B cell (primary cell): ENCODE measurements at regions of chr11 and their contacts with region 1.

Region 1: GRCh38 chr11:10653926-10654810 is 39.4 kb downstream of the IRAG1 start:
- DNase-seq: peak; percentile 79
- ATAC-seq: peak; percentile 69
- H3K4me3 ChIP-seq: peak overlapping the region in 1 of 5 experiments; percentile 1
- H3K4me3 Mint-ChIP-seq: no peak overlapping the region
- H3K27ac ChIP-seq: no peak overlapping the region
- H3K27ac Mint-ChIP-seq: peak overlapping the region; percentile 2
- H3K4me1 ChIP-seq: peaks cover 60 to 66% of the 10 kb centered on the region in 2 donors
- H3K4me1 Mint-ChIP-seq: peaks cover 82% of the 10 kb centered on the region
- H3K27me3 ChIP-seq: no peaks in the 10 kb centered on the region
- H3K27me3 Mint-ChIP-seq: no peaks in the 10 kb centered on the region
- CTCF ChIP-seq: peak; percentile 63

Region 2: DNA sequence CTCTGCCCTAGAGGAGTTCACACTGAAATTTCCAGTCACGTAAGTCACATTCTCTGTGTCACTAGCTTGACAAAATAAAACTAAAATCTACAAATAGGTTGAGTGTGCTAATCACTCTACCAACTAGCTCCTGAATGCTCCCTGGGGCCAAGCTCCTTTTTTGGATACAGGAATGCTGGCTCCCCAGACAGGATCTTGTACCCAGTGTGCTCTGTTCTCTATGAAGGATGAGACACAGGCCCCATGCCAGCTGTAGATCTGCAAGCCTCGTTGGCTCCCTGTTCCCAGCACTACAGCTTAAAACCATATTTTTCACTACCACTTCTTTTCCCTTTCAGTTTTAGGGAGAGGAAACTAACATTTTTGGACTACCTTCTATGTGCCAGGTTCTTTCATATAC is 1273.4 kb before region 1 on chr11:
- CTCF ChIA-PET with region 1: no interaction called
- POLR2A ChIA-PET with region 1: no interaction called
- intact Hi-C with region 1: no loop called
- DNase-seq: no peak
- ATAC-seq: no peak
- H3K4me3 ChIP-seq: no peak overlapping the region
- H3K4me3 Mint-ChIP-seq: no peak overlapping the region
- H3K27ac ChIP-seq: no peak overlapping the region
- H3K27ac Mint-ChIP-seq: no peak overlapping the region
- H3K4me1 ChIP-seq: peaks cover 10 to 13% of the 10 kb centered on the region in 2 donors
- H3K4me1 Mint-ChIP-seq: peaks cover 12% of the 10 kb centered on the region
- H3K27me3 ChIP-seq: no peaks in the 10 kb centered on the region
- H3K27me3 Mint-ChIP-seq: no peaks in the 10 kb centered on the region
- CTCF ChIP-seq: no peak

Region 3: GRCh38 chr11:10405855-10406592 is 248.1 kb before region 1 on chr11:
- CTCF ChIA-PET with region 1: interaction called, 14 read pairs
- POLR2A ChIA-PET with region 1: no interaction called
- intact Hi-C with region 1: no loop called
- DNase-seq: peak; percentile 72
- ATAC-seq: peak; percentile 85
- H3K4me3 ChIP-seq: no peak overlapping the region
- H3K4me3 Mint-ChIP-seq: no peak overlapping the region
- H3K27ac ChIP-seq: no peak overlapping the region
- H3K27ac Mint-ChIP-seq: no peak overlapping the region
- H3K4me1 ChIP-seq: peaks cover 4 to 11% of the 10 kb centered on the region in 2 donors
- H3K4me1 Mint-ChIP-seq: peaks cover 7% of the 10 kb centered on the region
- H3K27me3 ChIP-seq: no peaks in the 10 kb centered on the region
- H3K27me3 Mint-ChIP-seq: no peaks in the 10 kb centered on the region
- CTCF ChIP-seq: peak; percentile 78

Region 4: GRCh38 chr11:10534316-10534715 is 119.9 kb before region 1 on chr11:
- CTCF ChIA-PET with region 1: interaction called, 11 read pairs
- POLR2A ChIA-PET with region 1: no interaction called
- intact Hi-C with region 1: no loop called
- DNase-seq: peak; percentile 54
- ATAC-seq: no peak
- H3K4me3 ChIP-seq: no peak overlapping the region
- H3K4me3 Mint-ChIP-seq: no peak overlapping the region
- H3K27ac ChIP-seq: peak overlapping the region in 1 of 2 donors; percentile 38
- H3K27ac Mint-ChIP-seq: no peak overlapping the region
- H3K4me1 ChIP-seq: peaks cover 24 to 39% of the 10 kb centered on the region in 2 donors
- H3K4me1 Mint-ChIP-seq: peaks cover 53% of the 10 kb centered on the region
- H3K27me3 ChIP-seq: no peaks in the 10 kb centered on the region
- H3K27me3 Mint-ChIP-seq: no peaks in the 10 kb centered on the region
- CTCF ChIP-seq: no peak

Region 5: GRCh38 chr11:10623797-10624761 is 30.1 kb before region 1 on chr11:
- CTCF ChIA-PET with region 1: interaction called, 10 read pairs
- POLR2A ChIA-PET with region 1: no interaction called
- intact Hi-C with region 1: no loop called
- DNase-seq: no peak
- ATAC-seq: no peak
- H3K4me3 ChIP-seq: no peak overlapping the region
- H3K4me3 Mint-ChIP-seq: peak overlapping the region; percentile 53
- H3K27ac ChIP-seq: peak overlapping the region; percentile 79 to 88
- H3K27ac Mint-ChIP-seq: peak overlapping the region; percentile 98
- H3K4me1 ChIP-seq: peaks cover 47 to 69% of the 10 kb centered on the region in 2 donors
- H3K4me1 Mint-ChIP-seq: peaks cover 77% of the 10 kb centered on the region
- H3K27me3 ChIP-seq: no peaks in the 10 kb centered on the region
- H3K27me3 Mint-ChIP-seq: no peaks in the 10 kb centered on the region
- CTCF ChIP-seq: no peak

Region 6: GRCh38 chr11:10694481-10695239 is 40.5 kb after region 1 on chr11:
- CTCF ChIA-PET with region 1: no interaction called
- POLR2A ChIA-PET with region 1: no interaction called
- intact Hi-C with region 1: no loop called
- DNase-seq: no peak
- ATAC-seq: no peak
- H3K4me3 ChIP-seq: no peak overlapping the region
- H3K4me3 Mint-ChIP-seq: no peak overlapping the region
- H3K27ac ChIP-seq: no peak overlapping the region
- H3K27ac Mint-ChIP-seq: no peak overlapping the region
- H3K4me1 ChIP-seq: no peaks in the 10 kb centered on the region
- H3K4me1 Mint-ChIP-seq: peaks cover 12% of the 10 kb centered on the region
- H3K27me3 ChIP-seq: no peaks in the 10 kb centered on the region
- H3K27me3 Mint-ChIP-seq: peaks cover 8% of the 10 kb centered on the region
- CTCF ChIP-seq: no peak

Region 7: GRCh38 chr11:10735481-10736475 is 81.6 kb after region 1 on chr11:
- CTCF ChIA-PET with region 1: interaction called, 3 read pairs
- POLR2A ChIA-PET with region 1: no interaction called
- intact Hi-C with region 1: loop called (anchors 10 kb)
- DNase-seq: peak; percentile 92
- ATAC-seq: peak; percentile 100
- H3K4me3 ChIP-seq: peak overlapping the region in 2 of 5 experiments; percentile 25 to 28
- H3K4me3 Mint-ChIP-seq: peak overlapping the region; percentile 86
- H3K27ac ChIP-seq: peak overlapping the region; percentile 22 to 35
- H3K27ac Mint-ChIP-seq: peak overlapping the region; percentile 95
- H3K4me1 ChIP-seq: peaks cover 7 to 13% of the 10 kb centered on the region in 2 donors
- H3K4me1 Mint-ChIP-seq: peaks cover 13% of the 10 kb centered on the region
- H3K27me3 ChIP-seq: no peaks in the 10 kb centered on the region
- H3K27me3 Mint-ChIP-seq: no peaks in the 10 kb centered on the region
- CTCF ChIP-seq: peak; percentile 94